ENCODE measurements at regions of chr7 and their contacts with region 1.

Region 1: DNA sequence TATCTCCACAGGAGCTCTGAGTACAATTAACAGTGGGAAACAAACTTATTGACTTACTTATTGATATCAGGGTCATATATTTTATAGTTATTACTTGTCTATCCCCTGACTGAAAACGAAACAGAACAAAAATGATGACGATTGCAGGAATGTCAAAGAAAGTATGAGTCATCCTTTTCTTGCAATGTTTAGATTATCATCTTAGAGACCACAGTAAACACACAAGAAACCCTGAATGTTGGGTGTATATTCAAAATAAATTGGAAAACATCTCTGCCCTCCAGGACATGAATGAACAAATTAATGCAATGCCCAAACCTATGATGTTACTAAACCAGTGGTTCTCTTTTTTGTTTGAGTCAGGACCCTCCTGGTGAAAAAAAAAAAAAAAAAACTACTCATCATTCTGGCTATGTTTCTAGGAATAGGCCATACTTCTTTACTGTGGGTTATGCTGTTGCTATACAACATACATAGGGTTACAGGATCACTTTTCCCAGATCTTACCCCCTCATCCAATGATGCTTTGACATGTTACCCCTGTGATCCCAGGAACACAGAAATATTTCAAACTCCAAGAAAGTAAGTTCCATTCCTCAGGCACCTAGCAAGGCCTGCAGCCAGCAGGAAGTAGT is 623.4 kb upstream of the IGFBP3 start:
- DNase-seq: peak; percentile 72
- H3K4me3 ChIP-seq: no peak overlapping the region
- H3K27ac ChIP-seq: peak overlapping the region; percentile 96
- H3K4me1 ChIP-seq: peaks cover 26% of the 10 kb centered on the region
- H3K27me3 ChIP-seq: no peaks in the 10 kb centered on the region
- CTCF ChIP-seq: no peak
- POLR2A ChIP-seq: no peak

Region 2: DNA sequence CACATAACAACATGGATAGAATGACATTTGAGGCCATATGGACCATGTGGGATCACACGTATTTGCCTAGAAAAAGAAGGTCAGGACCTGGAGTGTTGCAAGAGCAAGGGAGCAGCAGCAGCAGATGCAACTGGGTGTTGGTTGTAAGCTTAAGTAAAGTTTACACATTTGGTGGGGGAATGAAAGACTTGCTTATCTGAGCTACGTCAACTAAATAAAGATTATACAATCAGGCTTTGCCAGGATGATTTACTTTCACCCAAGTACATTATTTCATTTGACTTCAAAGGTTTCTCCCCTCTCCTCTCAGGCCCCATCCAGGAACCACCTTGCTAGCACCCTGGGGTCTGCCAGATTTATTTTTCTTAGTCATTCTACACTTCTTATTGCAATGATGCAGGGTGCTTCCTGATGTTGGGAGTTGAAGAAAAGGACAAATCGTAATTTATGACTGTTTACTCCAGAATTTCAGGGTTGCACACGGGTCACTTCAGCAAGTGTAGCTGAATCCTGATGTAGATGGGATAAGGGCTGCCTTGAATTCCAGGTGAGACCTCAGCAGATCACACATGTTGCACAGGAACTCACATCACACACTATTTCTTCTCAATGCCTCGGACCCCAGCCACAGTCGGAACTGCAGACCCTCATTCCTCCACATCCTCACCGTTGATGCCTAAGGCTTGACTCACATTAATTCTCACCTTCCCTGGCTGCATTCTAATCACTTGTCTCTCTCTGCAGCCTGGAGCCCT is 31.4 kb before region 1 on chr7:
- CTCF ChIA-PET with region 1: no interaction called
- POLR2A ChIA-PET with region 1: no interaction called
- dilution Hi-C with region 1: no loop called
- intact Hi-C with region 1: no loop called
- DNase-seq: no peak
- H3K4me3 ChIP-seq: no peak overlapping the region
- H3K27ac ChIP-seq: no peak overlapping the region
- H3K4me1 ChIP-seq: no peaks in the 10 kb centered on the region
- H3K27me3 ChIP-seq: no peaks in the 10 kb centered on the region
- CTCF ChIP-seq: no peak
- POLR2A ChIP-seq: no peak

Region 3: DNA sequence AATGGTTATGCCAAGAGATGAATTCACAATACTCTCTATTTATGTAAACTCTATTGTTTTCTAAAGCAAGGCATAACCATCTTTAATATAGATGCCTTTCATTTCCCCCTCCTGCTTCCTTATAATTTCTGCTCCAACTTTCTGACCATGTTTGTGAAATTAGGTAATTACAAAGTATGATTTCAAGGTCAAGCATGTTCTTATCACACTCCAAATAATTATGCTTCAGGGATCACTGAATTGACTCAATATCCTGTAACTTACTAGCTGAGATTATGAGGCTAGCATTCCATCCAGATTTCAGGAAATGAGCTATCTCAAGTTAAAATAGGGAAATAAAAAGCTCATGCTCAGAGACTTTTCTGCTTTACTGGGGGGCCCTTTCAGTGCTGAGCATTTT is 32.5 kb after region 1 on chr7:
- CTCF ChIA-PET with region 1: interaction called, 5 read pairs
- POLR2A ChIA-PET with region 1: no interaction called
- dilution Hi-C with region 1: no loop called
- intact Hi-C with region 1: loop called (anchors 1 kb)
- DNase-seq: peak; percentile 88
- H3K4me3 ChIP-seq: no peak overlapping the region
- H3K27ac ChIP-seq: peak overlapping the region; percentile 55
- H3K4me1 ChIP-seq: peaks cover 23% of the 10 kb centered on the region
- H3K27me3 ChIP-seq: no peaks in the 10 kb centered on the region
- CTCF ChIP-seq: no peak
- POLR2A ChIP-seq: peak; percentile 40

Region 4: DNA sequence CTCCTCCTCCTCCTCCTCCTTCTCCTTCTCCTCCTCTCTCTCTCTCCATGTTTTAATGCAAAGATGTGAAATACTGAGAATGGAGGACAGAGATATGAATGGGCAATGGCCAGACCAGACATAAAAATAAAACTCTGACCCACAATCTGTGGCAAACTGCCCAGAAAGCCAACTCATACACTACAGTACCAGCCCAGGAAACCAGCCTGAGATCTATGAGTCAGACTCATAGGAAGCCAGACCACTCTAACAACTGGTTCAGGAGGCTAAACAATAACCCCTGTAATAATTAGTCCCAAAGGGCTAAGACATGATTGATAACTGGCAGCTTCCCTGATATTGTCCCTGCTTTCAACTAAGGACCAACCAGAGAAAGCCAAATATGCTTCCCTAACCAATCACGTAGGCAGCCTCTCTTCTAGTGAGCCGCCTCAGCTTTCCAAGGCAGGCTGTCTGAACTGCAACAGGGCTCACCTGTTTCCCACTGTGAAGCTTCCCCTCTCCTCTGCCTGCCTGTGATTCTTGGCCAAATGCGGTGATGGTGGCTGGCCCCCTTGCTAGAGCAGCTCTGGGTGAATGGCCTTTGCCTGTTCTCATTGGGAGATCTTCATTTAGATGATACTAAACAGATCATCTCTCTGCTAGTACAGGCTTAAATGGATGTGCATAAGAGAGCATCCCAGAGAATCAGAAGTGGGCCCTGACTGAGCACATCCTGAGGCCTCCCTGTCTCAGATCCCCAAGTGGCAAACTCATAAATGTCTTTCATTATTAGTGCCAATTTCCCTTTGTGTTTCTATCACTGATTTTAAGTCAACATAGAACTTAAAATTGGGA is 219.8 kb after region 1 on chr7:
- CTCF ChIA-PET with region 1: no interaction called
- POLR2A ChIA-PET with region 1: no interaction called
- dilution Hi-C with region 1: no loop called
- intact Hi-C with region 1: loop called (anchors 1 kb)
- DNase-seq: peak; percentile 99
- H3K4me3 ChIP-seq: no peak overlapping the region
- H3K27ac ChIP-seq: peak overlapping the region; percentile 69
- H3K4me1 ChIP-seq: peaks cover 28% of the 10 kb centered on the region
- H3K27me3 ChIP-seq: no peaks in the 10 kb centered on the region
- CTCF ChIP-seq: no peak
- POLR2A ChIP-seq: no peak

Measured in endothelial cell of umbilical vein (primary cell).